ENCODE measurements at regions of chr3 and their contacts with region 1.

Region 1: GRCh38 chr3:150546226-150547044 is at the starts of genes EIF2A and SERP1:
- DNase-seq: peak; percentile 98
- H3K4me3 ChIP-seq: peak within 1 kb of the TSS; percentile 84 to 91
- H3K27ac ChIP-seq: peak within 1 kb of the TSS; percentile 95 to 98
- H3K4me1 ChIP-seq: peaks cover 4% of the 10 kb centered on the region
- H3K27me3 ChIP-seq: no peaks in the 10 kb centered on the region
- CTCF ChIP-seq: peak in 2 of 4 experiments; percentile 17 to 25
- POLR2A ChIP-seq: peak; percentile 99
- total RNA-seq, gene EIF2A: 71.9 to 141 TPM
- total RNA-seq, gene SERP1: 304 to 473 TPM

Region 2: DNA sequence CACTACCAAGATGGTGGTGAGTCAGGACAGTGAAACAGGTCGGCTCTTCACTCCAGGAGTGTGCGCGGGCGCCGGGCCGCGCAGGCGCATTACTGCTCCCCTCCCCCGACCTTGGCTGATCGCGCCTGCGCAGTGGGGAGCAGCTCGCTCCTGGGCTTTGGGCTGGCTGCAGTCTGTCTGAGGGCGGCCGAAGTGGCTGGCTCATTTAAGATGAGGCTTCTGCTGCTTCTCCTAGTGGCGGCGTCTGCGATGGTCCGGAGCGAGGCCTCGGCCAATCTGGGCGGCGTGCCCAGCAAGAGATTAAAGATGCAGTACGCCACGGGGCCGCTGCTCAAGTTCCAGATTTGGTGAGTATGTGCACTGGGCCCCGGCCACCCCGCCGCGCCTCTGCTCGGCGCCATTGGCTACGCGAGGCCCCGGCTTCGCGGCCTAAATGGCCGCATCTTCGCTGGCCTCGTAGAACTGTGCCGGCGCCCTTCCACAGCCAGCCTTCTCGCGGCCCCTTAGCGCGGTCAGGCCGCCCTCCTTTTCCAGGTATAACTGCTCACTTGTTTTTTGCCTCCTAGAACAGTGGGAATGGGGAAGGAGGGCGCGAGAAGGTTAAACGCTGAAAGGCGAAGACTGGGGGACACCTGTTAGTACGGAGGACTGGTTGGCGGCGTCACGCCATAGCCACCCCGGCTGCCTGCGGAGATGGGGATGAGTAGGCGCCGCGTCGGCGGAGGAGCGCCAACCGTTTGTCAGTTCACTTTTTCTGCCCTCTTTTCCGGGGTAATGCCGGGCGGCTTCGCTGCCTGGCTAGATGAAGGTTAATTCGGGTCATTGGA is 56.9 kb after region 1 on chr3 and contains the start of gene SELENOT:
- intact Hi-C with region 1: loop called (anchors 5 kb)
- DNase-seq: peak; percentile 93
- H3K4me3 ChIP-seq: peak within 1 kb of the TSS; percentile 60 to 84
- H3K27ac ChIP-seq: peak within 1 kb of the TSS; percentile 95 to 96
- H3K4me1 ChIP-seq: no peaks in the 10 kb centered on the region
- H3K27me3 ChIP-seq: no peaks in the 10 kb centered on the region
- CTCF ChIP-seq: peak in 2 of 4 experiments; percentile 26 to 53
- POLR2A ChIP-seq: peak; percentile 97
- total RNA-seq, gene SELENOT: 123 to 126 TPM

Region 3: DNA sequence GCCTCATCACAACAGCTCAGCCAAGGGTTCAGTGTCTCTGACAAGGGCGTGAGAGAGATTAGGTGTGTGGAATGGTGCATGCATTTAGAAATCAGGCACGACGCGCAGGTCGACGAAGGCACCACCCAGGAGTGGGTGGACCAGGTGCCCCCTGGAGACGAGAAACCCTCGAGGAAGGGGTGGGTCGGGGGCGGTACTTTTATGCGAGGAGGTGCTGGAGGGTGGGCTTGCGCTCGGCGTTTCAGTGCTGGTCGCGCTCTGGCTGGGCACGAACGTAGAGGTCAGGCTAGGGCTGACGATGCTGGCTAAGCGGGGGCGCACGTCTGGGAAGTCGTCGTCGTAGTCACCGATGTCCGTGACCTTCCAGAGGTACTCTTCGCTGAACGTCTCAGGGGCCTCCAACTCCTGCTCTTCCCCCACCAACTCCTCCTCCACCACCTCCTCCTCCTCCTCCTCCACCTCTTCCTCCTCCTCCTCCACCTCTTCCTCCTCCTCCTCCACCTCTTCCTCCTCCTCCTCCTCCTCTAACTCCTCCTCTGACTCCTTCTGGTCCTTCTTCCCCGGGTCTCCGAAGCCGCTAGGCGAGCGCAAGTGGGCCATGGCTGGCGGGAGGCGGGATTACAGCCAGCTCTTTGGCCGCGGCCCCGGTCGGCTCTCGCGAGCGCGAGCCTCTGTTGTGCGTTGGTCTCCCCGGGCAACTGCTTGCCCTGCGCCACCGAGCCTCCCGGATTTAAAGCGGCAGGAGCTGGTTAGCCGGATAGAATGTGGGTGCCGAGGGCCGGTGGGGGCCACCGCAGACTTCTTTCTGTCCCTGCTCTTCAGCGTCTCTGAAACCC is 157.1 kb after region 1 on chr3 and contains the start of gene ERICH6:
- intact Hi-C with region 1: loop called (anchors 5 kb)
- DNase-seq: peak; percentile 88
- H3K4me3 ChIP-seq: peak within 1 kb of the TSS; percentile 56 to 58
- H3K27ac ChIP-seq: peak within 1 kb of the TSS; percentile 83 to 87
- H3K4me1 ChIP-seq: no peaks in the 10 kb centered on the region
- H3K27me3 ChIP-seq: no peaks in the 10 kb centered on the region
- CTCF ChIP-seq: peak in 2 of 4 experiments; percentile 44 to 48
- POLR2A ChIP-seq: peak; percentile 51
- total RNA-seq, gene ERICH6: 0.09 to 0.57 TPM

Region 4: GRCh38 chr3:150763122-150763841 is 216.8 kb after region 1 on chr3 and contains the start of gene SIAH2:
- intact Hi-C with region 1: loop called (anchors 5 kb)
- DNase-seq: peak; percentile 94
- H3K4me3 ChIP-seq: peak within 1 kb of the TSS; percentile 74 to 98
- H3K27ac ChIP-seq: peak within 1 kb of the TSS; percentile 98 to 100
- H3K4me1 ChIP-seq: peaks cover 4% of the 10 kb centered on the region
- H3K27me3 ChIP-seq: no peaks in the 10 kb centered on the region
- CTCF ChIP-seq: peak in 2 of 4 experiments; percentile 36 to 46
- POLR2A ChIP-seq: peak; percentile 72
- total RNA-seq, gene SIAH2: 47.4 to 48.9 TPM